ENCODE measurements at regions of chr17 and their contacts with region 1.

Region 1: DNA sequence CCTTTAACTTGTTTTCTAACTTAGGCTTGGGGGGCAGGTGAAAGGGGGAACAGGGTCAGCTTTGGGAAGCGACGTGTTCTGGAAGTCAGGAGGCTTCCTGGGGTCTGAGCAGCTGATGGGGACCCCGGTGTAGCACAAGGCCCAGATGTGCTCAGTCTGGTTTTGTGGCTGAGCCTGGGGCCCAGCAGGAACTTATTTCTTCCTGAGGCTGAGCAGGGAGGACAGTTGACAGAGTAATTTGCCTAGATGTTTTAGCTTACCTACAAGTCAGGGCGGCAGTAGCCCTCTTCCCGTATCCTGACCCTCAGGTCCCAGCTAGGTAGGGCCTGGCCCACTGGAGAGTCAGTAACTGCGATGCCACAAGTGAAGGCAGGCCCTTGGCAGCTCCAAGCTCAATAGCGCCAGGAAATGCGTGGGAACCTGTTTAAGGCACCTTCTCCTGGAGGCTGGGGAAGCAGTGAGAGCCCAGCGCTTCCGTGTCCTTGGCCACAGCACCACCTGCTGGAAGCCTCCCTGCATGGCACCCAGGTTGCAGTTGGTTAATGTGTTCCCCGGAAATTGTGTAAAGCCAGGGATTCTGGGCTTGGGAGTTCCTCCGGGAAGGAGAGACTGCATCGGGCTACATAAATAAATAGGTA is 5.2 kb downstream of the CCR7 start:
- DNase-seq: peak; percentile 97 to 99
- ATAC-seq: peak; percentile 84 to 90
- H3K4me3 ChIP-seq: no peak overlapping the region
- H3K27ac ChIP-seq: peak overlapping the region; percentile 95 to 99
- H3K4me1 ChIP-seq: peaks cover 60% of the 10 kb centered on the region
- CTCF ChIP-seq: peak; percentile 99
- EP300 ChIP-seq: peak in 1 of 2 experiments; percentile 22; a peak in 1 of 5 replicates
- POLR2A ChIP-seq: no peak
- RAD21 ChIP-seq: peak; percentile 100

Region 2: DNA sequence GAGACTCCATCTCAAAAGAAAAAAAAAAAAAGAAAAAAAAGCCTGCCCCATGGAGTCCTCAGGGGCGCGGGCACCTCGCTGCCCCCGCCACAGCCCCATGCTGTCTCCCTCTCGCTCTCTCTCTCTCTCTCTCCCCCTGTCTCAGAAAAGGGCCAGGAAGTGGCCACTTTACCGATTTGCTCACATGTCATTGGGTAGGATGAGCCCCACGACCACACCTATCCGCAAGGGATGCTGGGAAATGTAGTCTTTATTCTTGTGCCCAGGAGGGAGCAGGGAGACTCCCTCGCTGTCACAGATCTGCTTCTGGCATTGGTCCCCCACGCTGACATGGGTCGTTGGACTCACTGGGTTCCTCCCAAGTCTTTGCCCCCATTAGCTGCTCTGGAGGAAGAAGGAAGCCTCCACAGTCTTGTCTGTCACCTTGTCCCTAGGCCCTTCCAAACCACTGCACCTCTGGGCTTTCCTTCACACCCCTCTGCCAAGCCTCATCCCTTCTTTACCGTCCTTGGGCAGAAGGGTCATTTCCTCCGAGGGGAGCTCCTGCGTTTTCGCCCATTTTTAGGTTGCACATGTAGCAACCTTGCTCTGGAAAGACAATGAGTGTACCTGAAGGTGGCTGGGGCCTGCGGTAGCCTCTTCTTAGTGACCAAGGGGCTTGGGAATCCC is 188.7 kb before region 1 on chr17:
- CTCF ChIA-PET with region 1: interaction called, 157 read pairs
- POLR2A ChIA-PET with region 1: no interaction called
- DNase-seq: peak in 1 of 2 experiments; percentile 70
- ATAC-seq: peak; percentile 59 to 69; a peak in 5 of 6 replicates
- H3K4me3 ChIP-seq: no peak overlapping the region
- H3K27ac ChIP-seq: no peak overlapping the region
- H3K4me1 ChIP-seq: peaks cover 9% of the 10 kb centered on the region; the same call in 1 of the 3 replicates
- CTCF ChIP-seq: no peak
- EP300 ChIP-seq: no peak
- POLR2A ChIP-seq: no peak
- RAD21 ChIP-seq: no peak

Region 3: DNA sequence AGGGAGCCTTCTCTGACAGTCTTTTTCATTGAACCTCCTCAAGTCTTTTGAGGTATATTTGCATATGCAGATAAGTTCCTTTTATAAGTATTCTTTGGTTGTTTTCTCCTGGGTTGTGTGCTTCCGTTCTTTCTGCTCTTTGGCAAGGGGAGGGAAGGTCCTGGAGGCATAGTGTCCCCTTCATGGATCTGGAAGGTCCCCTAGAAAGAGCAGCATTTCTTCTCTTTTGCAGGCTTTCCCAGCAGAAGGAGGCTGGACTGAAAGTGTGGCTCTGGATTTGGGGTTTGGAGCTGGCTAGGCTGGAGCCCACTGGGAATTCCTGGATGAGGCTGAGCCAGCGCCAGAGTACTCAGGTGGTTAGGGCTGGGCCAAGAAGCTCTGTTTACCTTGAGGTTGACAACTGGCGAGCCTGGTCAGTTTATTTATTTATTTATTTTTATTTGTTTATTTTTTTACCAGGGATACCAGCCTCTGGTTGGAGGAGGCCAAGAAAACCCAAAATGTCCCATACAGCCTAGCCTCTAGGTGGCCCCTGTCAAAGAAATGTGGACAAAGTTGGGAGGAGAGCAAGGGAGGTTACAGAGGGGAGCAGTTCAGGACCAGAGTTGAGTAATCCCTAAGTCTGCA is 137.0 kb before region 1 on chr17:
- CTCF ChIA-PET with region 1: interaction called, 50 read pairs
- POLR2A ChIA-PET with region 1: interaction called, 3 read pairs
- DNase-seq: peak; percentile 64 to 65
- ATAC-seq: peak; percentile 66 to 82; a peak in 5 of 6 replicates
- H3K4me3 ChIP-seq: no peak overlapping the region
- H3K27ac ChIP-seq: peak overlapping the region in 1 of 2 experiments; percentile 17; a peak in 1 of 6 replicates
- H3K4me1 ChIP-seq: peaks cover 25% of the 10 kb centered on the region
- CTCF ChIP-seq: peak; percentile 41
- EP300 ChIP-seq: no peak
- POLR2A ChIP-seq: no peak
- RAD21 ChIP-seq: no peak; a peak in 1 of 5 replicates

Region 4: GRCh38 chr17:40457964-40458791 is 101.9 kb before region 1 on chr17:
- CTCF ChIA-PET with region 1: interaction called, 35 read pairs
- POLR2A ChIA-PET with region 1: interaction called, 21 read pairs
- DNase-seq: peak in 1 of 2 experiments; percentile 68
- ATAC-seq: peak in 1 of 2 experiments; percentile 7; a peak in 3 of 6 replicates
- H3K4me3 ChIP-seq: peak overlapping the region; percentile 16
- H3K27ac ChIP-seq: peak overlapping the region; percentile 71 to 90
- H3K4me1 ChIP-seq: peaks cover 100% of the 10 kb centered on the region
- CTCF ChIP-seq: no peak
- EP300 ChIP-seq: no peak; a peak in 1 of 5 replicates
- POLR2A ChIP-seq: no peak
- RAD21 ChIP-seq: no peak

Region 5: GRCh38 chr17:40499551-40500174 is 60.4 kb before region 1 on chr17:
- CTCF ChIA-PET with region 1: interaction called, 23 read pairs
- POLR2A ChIA-PET with region 1: interaction called, 7 read pairs
- DNase-seq: peak; percentile 85 to 88
- ATAC-seq: peak; percentile 77 to 80
- H3K4me3 ChIP-seq: peak overlapping the region; percentile 60
- H3K27ac ChIP-seq: peak overlapping the region; percentile 96 to 97
- H3K4me1 ChIP-seq: peaks cover 71% of the 10 kb centered on the region
- CTCF ChIP-seq: no peak
- EP300 ChIP-seq: no peak
- POLR2A ChIP-seq: peak; percentile 74
- RAD21 ChIP-seq: peak; percentile 16 to 28; a peak in 2 of 5 replicates

Region 6: DNA sequence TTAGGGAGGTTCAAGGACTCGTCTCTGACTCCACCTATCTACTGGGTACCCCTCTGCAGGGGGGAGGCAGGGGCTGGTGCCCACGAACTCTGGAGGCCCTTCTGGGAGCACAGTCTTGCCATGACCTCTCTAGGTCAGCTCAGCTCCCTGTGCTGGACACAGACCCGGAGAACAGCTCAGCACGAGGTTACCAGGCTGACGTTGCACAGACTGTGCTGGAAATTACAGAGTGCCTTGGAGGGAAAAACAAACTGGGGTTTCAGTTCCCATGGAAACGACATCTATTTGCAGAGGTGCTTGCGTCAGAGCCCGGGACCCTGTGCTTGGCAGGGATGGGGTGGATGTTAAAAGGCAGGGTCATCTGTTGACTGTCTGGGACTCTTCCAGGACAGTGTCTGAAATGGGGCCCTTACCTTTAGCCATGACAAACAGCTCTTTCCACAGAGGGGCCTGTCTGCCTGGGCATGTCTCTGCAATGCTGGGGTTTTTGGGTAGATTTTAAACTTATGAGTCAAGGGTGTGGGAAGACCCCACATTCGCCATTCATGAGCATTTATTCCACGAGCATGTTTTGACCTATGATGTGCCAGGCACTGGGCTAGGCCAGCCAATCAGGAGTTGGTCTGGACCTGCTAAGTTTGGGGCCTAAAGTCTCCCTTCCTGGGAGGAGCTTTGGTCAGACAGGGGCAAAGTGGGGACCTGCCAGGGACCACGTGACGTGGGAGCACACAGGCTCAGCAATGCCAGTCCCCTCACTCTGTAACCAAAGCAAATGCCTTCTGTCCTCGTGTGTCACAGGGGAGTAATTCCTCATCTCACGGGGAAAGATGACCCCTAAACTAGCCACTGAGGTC is 17.3 kb before region 1 on chr17:
- CTCF ChIA-PET with region 1: interaction called, 1,144 read pairs
- POLR2A ChIA-PET with region 1: interaction called, 27 read pairs
- DNase-seq: peak; percentile 99 to 100
- ATAC-seq: peak; percentile 87 to 90
- H3K4me3 ChIP-seq: no peak overlapping the region
- H3K27ac ChIP-seq: peak overlapping the region; percentile 95 to 99
- H3K4me1 ChIP-seq: peaks cover 71% of the 10 kb centered on the region
- CTCF ChIP-seq: no peak
- EP300 ChIP-seq: peak; percentile 100
- POLR2A ChIP-seq: no peak
- RAD21 ChIP-seq: peak; percentile 4 to 55; a peak in 4 of 5 replicates

Region 7: GRCh38 chr17:40615295-40615988 is 55.4 kb after region 1 on chr17:
- CTCF ChIA-PET with region 1: interaction called, 15 read pairs
- POLR2A ChIA-PET with region 1: no interaction called
- DNase-seq: peak; percentile 84 to 91
- ATAC-seq: peak; percentile 84 to 93
- H3K4me3 ChIP-seq: no peak overlapping the region
- H3K27ac ChIP-seq: peak overlapping the region in 1 of 2 experiments; percentile 45; a peak in 2 of 6 replicates
- H3K4me1 ChIP-seq: peaks cover 12% of the 10 kb centered on the region
- CTCF ChIP-seq: peak; percentile 93
- EP300 ChIP-seq: no peak
- POLR2A ChIP-seq: no peak
- RAD21 ChIP-seq: peak; percentile 94 to 96